Activated B cell treated with CpG ODN at 0.5 μM for 24 hours (primary cell): ENCODE measurements at regions of chr5 and their contacts with region 1.

Region 1: GRCh38 chr5:161258438-161258837 is 288.1 kb downstream of the GABRB2 start:
- DNase-seq: no peak
- ATAC-seq: no peak
- H3K4me3 Mint-ChIP-seq: no peak overlapping the region
- H3K27ac Mint-ChIP-seq: no peak overlapping the region
- H3K4me1 Mint-ChIP-seq: no peaks in the 10 kb centered on the region
- H3K27me3 Mint-ChIP-seq: no peaks in the 10 kb centered on the region
- CTCF ChIP-seq: no peak

Region 2: GRCh38 chr5:161246749-161247148 is 11.7 kb before region 1 on chr5:
- CTCF ChIA-PET with region 1: no interaction called
- POLR2A ChIA-PET with region 1: no interaction called
- intact Hi-C with region 1: loop called (anchors 1 kb)
- DNase-seq: no peak
- ATAC-seq: no peak
- H3K4me3 Mint-ChIP-seq: no peak overlapping the region
- H3K27ac Mint-ChIP-seq: no peak overlapping the region
- H3K4me1 Mint-ChIP-seq: no peaks in the 10 kb centered on the region
- H3K27me3 Mint-ChIP-seq: no peaks in the 10 kb centered on the region
- CTCF ChIP-seq: no peak